Naive thymus-derived CD4-positive, alpha-beta T cell (primary cell): ENCODE measurements at regions of chr12 and their contacts with region 1.

Region 1: GRCh38 chr12:56688129-56688845 is at the start of gene PTGES3:
- DNase-seq: peak; percentile 95 to 98 (median 98)
- ATAC-seq: peak; percentile 87
- H3K4me3 ChIP-seq: peak within 1 kb of the TSS; percentile 80
- H3K4me3 Mint-ChIP-seq: peak within 1 kb of the TSS; percentile 97 to 100 (median 100)
- H3K27ac ChIP-seq: peak within 1 kb of the TSS; percentile 98
- H3K27ac Mint-ChIP-seq: peak within 1 kb of the TSS; percentile 95 to 100 (median 99)
- H3K4me1 ChIP-seq: peaks cover 12 to 19% of the 10 kb centered on the region in 2 donors
- H3K4me1 Mint-ChIP-seq: peaks cover 20 to 41% (median 34%) of the 10 kb centered on the region in 7 donors
- H3K27me3 ChIP-seq: no peaks in the 10 kb centered on the region
- H3K27me3 Mint-ChIP-seq: no peaks in the 10 kb centered on the region
- total RNA-seq, gene PTGES3: 111 to 229 (median 153) TPM

Region 2: DNA sequence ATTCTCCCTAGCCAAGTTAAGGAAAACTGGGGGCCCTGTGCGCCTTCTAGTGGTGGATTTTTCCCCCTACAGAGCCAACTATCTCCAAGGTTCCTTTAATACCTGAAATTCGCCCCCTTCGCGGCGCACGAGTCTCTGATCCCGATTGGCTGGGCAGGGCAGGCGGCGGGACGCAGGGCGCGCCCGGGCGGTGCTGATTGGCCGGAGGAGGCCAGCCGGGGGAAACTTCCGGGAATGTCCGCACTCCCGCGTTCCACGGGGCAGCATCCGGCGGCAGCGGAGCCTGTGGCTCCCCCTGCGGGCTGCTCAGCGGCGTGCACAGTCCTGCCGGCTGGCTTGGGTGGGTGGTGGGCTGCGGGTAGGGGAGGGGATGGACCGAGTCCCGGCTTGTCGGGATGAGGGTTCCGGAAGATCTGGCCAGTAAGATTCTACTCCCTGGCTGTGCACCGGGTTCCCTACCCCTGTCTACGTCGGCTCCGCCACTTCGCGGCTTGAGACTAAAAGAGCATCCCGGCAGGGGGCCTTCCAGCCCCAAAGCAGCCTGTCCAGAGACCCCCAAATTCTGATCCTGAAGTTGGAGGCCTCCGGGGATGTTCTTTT is 464.1 kb before region 1 on chr12 and contains the start of gene NABP2:
- CTCF ChIA-PET with region 1: no interaction called
- POLR2A ChIA-PET with region 1: interaction called, 3 read pairs
- intact Hi-C with region 1: loop called in 1 of 2 experiments (anchors 2 kb)
- DNase-seq: peak; percentile 78 to 97 (median 81)
- ATAC-seq: peak; percentile 85
- H3K4me3 ChIP-seq: peak within 1 kb of the TSS; percentile 82
- H3K4me3 Mint-ChIP-seq: peak within 1 kb of the TSS; percentile 77 to 99 (median 87)
- H3K27ac ChIP-seq: peak within 1 kb of the TSS; percentile 98
- H3K27ac Mint-ChIP-seq: peak within 1 kb of the TSS; percentile 78 to 100 (median 91)
- H3K4me1 ChIP-seq: peaks cover 22 to 27% of the 10 kb centered on the region in 2 donors
- H3K4me1 Mint-ChIP-seq: peaks cover 16 to 57% (median 46%) of the 10 kb centered on the region in 7 donors
- H3K27me3 ChIP-seq: no peaks in the 10 kb centered on the region
- H3K27me3 Mint-ChIP-seq: peaks cover 0 to 3% (median 0%) of the 10 kb centered on the region in 5 donors
- total RNA-seq, gene NABP2: 9.2 to 61.2 (median 11.8) TPM

Region 3: GRCh38 chr12:56630160-56630632 is 58.1 kb before region 1 on chr12 and contains the start of gene BAZ2A:
- CTCF ChIA-PET with region 1: interaction called, 6 read pairs
- POLR2A ChIA-PET with region 1: interaction called, 103 read pairs
- intact Hi-C with region 1: loop called in 1 of 2 experiments (anchors 1 kb)
- DNase-seq: peak; percentile 71 to 87 (median 82)
- ATAC-seq: peak; percentile 88
- H3K4me3 ChIP-seq: peak within 1 kb of the TSS; percentile 99
- H3K4me3 Mint-ChIP-seq: peak within 1 kb of the TSS; percentile 85 to 99 (median 91)
- H3K27ac ChIP-seq: peak within 1 kb of the TSS; percentile 99
- H3K27ac Mint-ChIP-seq: peak within 1 kb of the TSS; percentile 93 to 99 (median 95)
- H3K4me1 ChIP-seq: peaks cover 45 to 51% of the 10 kb centered on the region in 2 donors
- H3K4me1 Mint-ChIP-seq: peaks cover 55 to 86% (median 74%) of the 10 kb centered on the region in 7 donors
- H3K27me3 ChIP-seq: no peaks in the 10 kb centered on the region
- H3K27me3 Mint-ChIP-seq: no peaks in the 10 kb centered on the region
- total RNA-seq, gene BAZ2A: 127 to 230 (median 191) TPM

Region 4: GRCh38 chr12:56677680-56678079 is 10.6 kb before region 1 on chr12:
- CTCF ChIA-PET with region 1: interaction called, 5 read pairs
- POLR2A ChIA-PET with region 1: interaction called, 30 read pairs
- intact Hi-C with region 1: loop called in 1 of 2 experiments (anchors 2 kb)
- DNase-seq: no peak
- ATAC-seq: peak; percentile 10
- H3K4me3 ChIP-seq: no peak overlapping the region
- H3K4me3 Mint-ChIP-seq: peak overlapping the region in 4 of 10 donors; percentile 42 to 63 (median 48)
- H3K27ac ChIP-seq: peak overlapping the region; percentile 34
- H3K27ac Mint-ChIP-seq: peak overlapping the region in 8 of 9 donors; percentile 50 to 87 (median 71)
- H3K4me1 ChIP-seq: peaks cover 42 to 48% of the 10 kb centered on the region in 2 donors
- H3K4me1 Mint-ChIP-seq: peaks cover 30 to 85% (median 63%) of the 10 kb centered on the region in 7 donors
- H3K27me3 ChIP-seq: no peaks in the 10 kb centered on the region
- H3K27me3 Mint-ChIP-seq: no peaks in the 10 kb centered on the region

Region 5: DNA sequence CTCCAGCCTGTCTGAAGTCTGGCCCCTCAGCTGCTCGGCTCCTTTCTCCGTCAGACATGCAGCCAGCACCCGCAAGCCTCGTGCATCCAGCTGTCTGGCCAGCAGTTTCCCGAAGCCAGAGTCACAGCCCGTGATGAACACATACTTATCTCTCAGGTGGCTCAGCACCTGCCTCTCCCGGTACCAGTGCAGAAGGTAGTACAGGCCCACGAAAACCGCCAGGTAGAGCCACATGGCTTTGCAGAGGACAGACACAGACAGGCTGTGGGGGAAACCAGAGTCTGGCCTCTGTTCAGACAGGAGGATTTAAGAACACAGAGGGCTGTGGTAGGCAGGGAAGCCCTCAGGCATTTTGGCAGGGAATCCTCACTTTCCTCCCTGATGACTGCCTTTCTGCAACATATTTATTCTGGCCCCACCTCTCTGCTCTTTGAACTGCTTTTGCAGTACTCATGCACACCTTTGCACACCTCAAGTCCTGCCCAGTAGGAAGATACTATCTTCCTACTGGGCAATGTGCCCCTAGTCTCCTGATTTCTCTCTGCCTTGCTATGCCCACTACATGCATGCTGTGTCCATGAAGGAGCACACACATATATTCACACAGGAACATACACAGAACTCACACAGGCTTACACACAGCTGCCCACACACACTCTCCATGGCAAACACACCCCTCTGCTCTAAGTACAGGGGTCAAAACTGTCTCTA is 269.1 kb after region 1 on chr12 and contains the start of gene RDH16:
- CTCF ChIA-PET with region 1: no interaction called
- POLR2A ChIA-PET with region 1: no interaction called
- intact Hi-C with region 1: no loop called
- DNase-seq: no peak
- ATAC-seq: no peak
- H3K4me3 ChIP-seq: no peak within 1 kb of the TSS
- H3K4me3 Mint-ChIP-seq: no peak within 1 kb of the TSS
- H3K27ac ChIP-seq: no peak within 1 kb of the TSS
- H3K27ac Mint-ChIP-seq: no peak within 1 kb of the TSS
- H3K4me1 ChIP-seq: no peaks in the 10 kb centered on the region
- H3K4me1 Mint-ChIP-seq: peaks cover 0 to 2% (median 0%) of the 10 kb centered on the region in 7 donors
- H3K27me3 ChIP-seq: no peaks in the 10 kb centered on the region
- H3K27me3 Mint-ChIP-seq: peaks cover 0 to 13% (median 3%) of the 10 kb centered on the region in 5 donors
- total RNA-seq, gene RDH16: 0.44 to 2.0 (median 1.2) TPM

Region 6: GRCh38 chr12:57005980-57006808 is 317.9 kb after region 1 on chr12 and contains the start of gene ZBTB39:
- CTCF ChIA-PET with region 1: interaction called, 4 read pairs
- POLR2A ChIA-PET with region 1: interaction called, 5 read pairs
- intact Hi-C with region 1: loop called in 1 of 2 experiments (anchors 5 kb)
- DNase-seq: peak; percentile 51 to 84 (median 62)
- ATAC-seq: peak; percentile 91
- H3K4me3 ChIP-seq: peak within 1 kb of the TSS; percentile 63
- H3K4me3 Mint-ChIP-seq: peak within 1 kb of the TSS; percentile 90 to 94 (median 92)
- H3K27ac ChIP-seq: peak within 1 kb of the TSS; percentile 82
- H3K27ac Mint-ChIP-seq: peak within 1 kb of the TSS; percentile 92 to 95 (median 95)
- H3K4me1 ChIP-seq: peaks cover 20 to 46% of the 10 kb centered on the region in 2 donors
- H3K4me1 Mint-ChIP-seq: peaks cover 36 to 80% (median 76%) of the 10 kb centered on the region in 7 donors
- H3K27me3 ChIP-seq: no peaks in the 10 kb centered on the region
- H3K27me3 Mint-ChIP-seq: no peaks in the 10 kb centered on the region
- total RNA-seq, gene ZBTB39: 5.8 to 12.9 (median 10.7) TPM